Aorta (tissue), 5 donors: ENCODE measurements at regions of chr3 and their contacts with region 1.

Region 1: DNA sequence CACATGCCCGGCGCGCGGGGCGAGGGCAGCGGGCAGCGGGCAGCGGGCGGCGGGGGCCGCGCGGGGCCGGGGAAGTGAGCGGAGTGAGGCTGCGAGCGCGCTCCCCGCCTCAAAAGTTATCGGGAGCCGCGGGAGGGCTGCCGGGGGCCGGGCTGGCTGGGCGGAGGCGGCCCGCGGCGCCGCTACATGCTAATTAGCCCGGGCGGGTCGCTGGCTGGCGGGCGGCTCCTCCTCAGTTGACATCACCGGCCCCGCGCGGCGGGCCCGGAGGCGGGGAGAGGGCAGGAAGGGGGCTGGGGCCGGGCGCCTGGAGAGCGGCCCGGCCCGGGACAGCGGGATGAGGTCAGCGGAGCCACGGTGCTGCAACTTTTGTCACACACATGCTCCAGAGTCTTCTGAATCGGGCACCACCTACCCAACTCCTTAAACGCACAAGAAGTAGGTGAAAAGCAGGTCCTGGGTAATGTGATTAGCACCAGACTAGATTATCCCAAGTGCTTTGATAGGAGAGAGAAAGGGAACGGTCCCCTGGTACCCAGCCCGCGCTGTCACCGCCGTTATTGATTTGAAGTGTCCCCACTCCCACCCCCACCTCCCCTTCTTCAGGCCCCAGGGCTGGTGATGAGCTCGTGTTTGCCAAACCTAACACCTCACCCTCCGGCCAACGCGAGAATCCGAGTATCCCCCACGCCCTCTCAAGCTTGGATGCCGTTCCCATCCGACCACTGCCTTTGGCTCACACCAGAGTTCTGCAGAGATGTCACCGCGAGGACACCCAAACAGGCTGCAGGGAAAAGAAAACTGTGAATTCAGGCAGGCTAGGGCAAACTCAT is at the start of gene HEG1:
- DNase-seq: peak; percentile 95 to 97
- ATAC-seq: peak; percentile 92
- H3K4me3 ChIP-seq: peak within 1 kb of the TSS; percentile 98
- H3K27ac ChIP-seq: peak within 1 kb of the TSS; percentile 97 to 99
- H3K4me1 ChIP-seq: peaks cover 6 to 11% of the 10 kb centered on the region in 2 donors
- H3K27me3 ChIP-seq: no peaks in the 10 kb centered on the region
- total RNA-seq, gene HEG1: 99.3 to 204 TPM

Region 2: DNA sequence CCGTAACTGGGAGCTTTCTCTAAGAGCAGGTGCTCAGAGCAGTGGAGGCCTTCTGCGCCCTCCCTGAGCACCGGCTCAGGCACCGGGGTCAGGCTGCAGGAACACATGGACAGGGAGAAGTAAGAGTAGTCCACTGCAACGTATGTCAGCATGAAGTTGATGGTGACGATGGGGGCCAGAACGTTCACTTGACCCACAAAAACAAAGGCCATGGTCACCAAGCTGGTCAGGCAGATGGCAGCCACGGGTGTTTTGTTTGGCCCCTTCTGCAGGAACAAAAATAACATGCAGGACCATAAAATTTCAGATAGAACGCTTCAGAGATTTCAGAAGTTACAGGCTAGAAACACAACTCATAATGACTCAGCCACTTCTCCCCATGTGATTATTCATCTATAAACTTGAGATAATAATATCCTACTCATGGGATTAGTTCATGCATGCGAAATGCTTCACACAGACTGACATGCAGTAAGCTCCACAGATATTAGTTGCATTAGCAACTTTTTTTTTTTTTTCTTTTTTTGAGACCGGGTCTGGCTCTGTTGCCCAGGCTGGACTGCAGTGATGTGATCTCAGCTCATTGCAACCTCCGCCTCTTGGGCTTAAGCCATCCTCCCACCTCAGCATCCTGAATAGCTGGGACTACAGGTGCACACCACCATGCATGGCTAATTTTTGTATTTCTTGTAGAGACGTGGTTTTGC is 51.9 kb after region 1 on chr3:
- intact Hi-C with region 1: loop called in 1 of 2 experiments (anchors 5 kb)
- DNase-seq: peak in 1 of 2 donors; percentile 60
- ATAC-seq: peak; percentile 70
- H3K4me3 ChIP-seq: no peak overlapping the region
- H3K27ac ChIP-seq: peak overlapping the region in 1 of 2 donors; percentile 37
- H3K4me1 ChIP-seq: peaks cover 3 to 5% of the 10 kb centered on the region in 2 donors
- H3K27me3 ChIP-seq: no peaks in the 10 kb centered on the region

Region 3: GRCh38 chr3:125118600-125118999 is 62.5 kb after region 1 on chr3:
- intact Hi-C with region 1: no loop called
- DNase-seq: no peak
- ATAC-seq: no peak
- H3K4me3 ChIP-seq: no peak overlapping the region
- H3K27ac ChIP-seq: no peak overlapping the region
- H3K4me1 ChIP-seq: no peaks in the 10 kb centered on the region
- H3K27me3 ChIP-seq: no peaks in the 10 kb centered on the region